Panc1 (cell line): ENCODE measurements at regions of chr15 and their contacts with region 1.

Region 1: GRCh38 chr15:62125773-62126172 is 39.3 kb downstream of the C2CD4B start:
- DNase-seq: no peak
- ATAC-seq: peak; percentile 84; the same call in 1 of the 2 replicates
- H3K4me3 ChIP-seq: no peak overlapping the region
- H3K27ac ChIP-seq: no peak overlapping the region
- H3K4me1 ChIP-seq: no peaks in the 10 kb centered on the region
- H3K27me3 ChIP-seq: no peaks in the 10 kb centered on the region
- CTCF ChIP-seq: peak; percentile 59

Region 2: GRCh38 chr15:61916104-61916503 is 209.7 kb before region 1 on chr15:
- CTCF ChIA-PET with region 1: no interaction called
- POLR2A ChIA-PET with region 1: no interaction called
- in situ Hi-C with region 1: no loop called
- intact Hi-C with region 1: no loop called
- DNase-seq: no peak
- ATAC-seq: no peak
- H3K4me3 ChIP-seq: no peak overlapping the region
- H3K27ac ChIP-seq: no peak overlapping the region
- H3K4me1 ChIP-seq: no peaks in the 10 kb centered on the region
- H3K27me3 ChIP-seq: no peaks in the 10 kb centered on the region
- CTCF ChIP-seq: no peak

Region 3: DNA sequence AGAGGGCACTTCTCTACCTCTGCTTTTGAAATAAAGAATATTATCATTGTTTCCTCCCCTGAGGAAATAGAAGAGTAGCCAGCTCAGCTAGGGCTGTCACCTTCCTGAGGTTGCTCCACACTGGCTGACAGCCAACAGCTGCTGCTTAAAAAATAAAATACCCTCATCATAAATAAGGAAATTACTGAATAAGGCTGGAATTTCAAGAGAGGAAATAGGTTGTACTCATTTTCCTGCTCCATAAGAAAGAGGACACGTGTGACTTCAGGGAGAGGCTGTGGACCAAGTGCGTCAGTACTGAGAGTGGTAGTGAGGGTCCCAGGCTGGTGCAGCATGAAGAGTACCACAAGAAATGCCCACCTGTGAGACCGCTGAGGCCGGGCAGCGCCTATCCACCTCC is 47.4 kb after region 1 on chr15:
- CTCF ChIA-PET with region 1: no interaction called
- POLR2A ChIA-PET with region 1: no interaction called
- in situ Hi-C with region 1: no loop called
- intact Hi-C with region 1: loop called (anchors 1 kb)
- DNase-seq: no peak
- ATAC-seq: no peak
- H3K4me3 ChIP-seq: no peak overlapping the region
- H3K27ac ChIP-seq: no peak overlapping the region
- H3K4me1 ChIP-seq: no peaks in the 10 kb centered on the region
- H3K27me3 ChIP-seq: peaks cover 13% of the 10 kb centered on the region
- CTCF ChIP-seq: no peak

Region 4: GRCh38 chr15:62208367-62208766 is 82.6 kb after region 1 on chr15:
- CTCF ChIA-PET with region 1: no interaction called
- POLR2A ChIA-PET with region 1: no interaction called
- in situ Hi-C with region 1: no loop called
- intact Hi-C with region 1: loop called (anchors 2 kb)
- DNase-seq: no peak
- ATAC-seq: no peak
- H3K4me3 ChIP-seq: no peak overlapping the region
- H3K27ac ChIP-seq: no peak overlapping the region
- H3K4me1 ChIP-seq: no peaks in the 10 kb centered on the region
- H3K27me3 ChIP-seq: no peaks in the 10 kb centered on the region
- CTCF ChIP-seq: no peak